Activated CD4-positive, alpha-beta T cell treated with anti-CD3 and anti-CD28 coated beads for 36 hours (primary cell): ENCODE measurements at regions of chr6 and their contacts with region 1.

Region 1: GRCh38 chr6:7725849-7726415 is at the start of gene BMP6:
- DNase-seq: peak; percentile 82
- ATAC-seq: peak; percentile 78
- H3K4me3 Mint-ChIP-seq: peak within 1 kb of the TSS; percentile 69
- H3K27ac Mint-ChIP-seq: no peak within 1 kb of the TSS
- H3K4me1 Mint-ChIP-seq: peaks cover 18% of the 10 kb centered on the region
- H3K27me3 Mint-ChIP-seq: peaks cover 60% of the 10 kb centered on the region
- total RNA-seq, gene BMP6: 0.14 to 0.27 TPM

Region 2: DNA sequence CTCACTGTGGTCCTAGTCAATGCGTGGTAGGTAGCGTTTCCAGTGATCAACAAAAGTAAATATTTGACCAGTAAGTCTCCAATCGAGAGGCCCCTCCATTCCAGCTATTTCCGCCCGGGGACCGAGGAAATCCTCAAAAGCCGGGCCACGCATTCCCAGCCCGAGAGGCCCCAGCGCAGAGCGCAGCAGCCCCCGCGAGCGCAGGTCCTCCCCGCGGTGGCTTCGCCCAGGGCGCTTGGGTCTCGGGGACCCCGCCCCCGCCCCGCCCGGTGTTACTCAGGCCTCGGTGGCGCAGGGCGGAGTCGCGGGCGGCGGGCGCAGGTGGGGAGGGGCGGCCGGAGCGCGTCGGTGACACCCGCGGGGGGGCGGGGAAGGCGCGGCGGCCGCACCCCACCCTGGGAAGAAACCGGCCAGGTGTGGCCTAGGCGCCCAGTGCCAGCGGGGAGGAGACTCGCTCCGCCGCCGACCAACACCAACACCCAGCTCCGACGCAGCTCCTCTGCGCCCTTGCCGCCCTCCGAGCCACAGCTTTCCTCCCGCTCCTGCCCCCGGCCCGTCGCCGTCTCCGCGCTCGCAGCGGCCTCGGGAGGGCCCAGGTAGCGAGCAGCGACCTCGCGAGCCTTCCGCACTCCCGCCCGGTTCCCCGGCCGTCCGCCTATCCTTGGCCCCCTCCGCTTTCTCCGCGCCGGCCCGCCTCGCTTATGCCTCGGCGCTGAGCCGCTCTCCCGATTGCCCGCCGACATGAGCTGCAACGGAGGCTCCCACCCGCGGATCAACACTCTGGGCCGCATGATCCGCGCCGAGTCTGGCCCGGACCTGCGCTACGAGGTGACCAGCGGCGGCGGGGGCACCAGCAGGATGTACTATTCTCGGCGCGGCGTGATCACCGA is 184.5 kb before region 1 on chr6 and contains the start of gene DSP:
- CTCF ChIA-PET with region 1: no interaction called
- POLR2A ChIA-PET with region 1: no interaction called
- intact Hi-C with region 1: loop called (anchors 5 kb)
- DNase-seq: peak; percentile 64
- ATAC-seq: peak; percentile 83
- H3K4me3 Mint-ChIP-seq: peak within 1 kb of the TSS; percentile 69
- H3K27ac Mint-ChIP-seq: no peak within 1 kb of the TSS
- H3K4me1 Mint-ChIP-seq: peaks cover 11% of the 10 kb centered on the region
- H3K27me3 Mint-ChIP-seq: peaks cover 58% of the 10 kb centered on the region
- total RNA-seq, gene DSP: 0.05 to 0.09 TPM

Region 3: GRCh38 chr6:7910654-7911344 is 184.9 kb after region 1 on chr6 and contains the start of gene TXNDC5:
- CTCF ChIA-PET with region 1: interaction called, 3 read pairs
- POLR2A ChIA-PET with region 1: no interaction called
- intact Hi-C with region 1: loop called (anchors 1 to 5 kb)
- DNase-seq: peak; percentile 83
- ATAC-seq: peak; percentile 87
- H3K4me3 Mint-ChIP-seq: peak within 1 kb of the TSS; percentile 91
- H3K27ac Mint-ChIP-seq: peak within 1 kb of the TSS; percentile 76
- H3K4me1 Mint-ChIP-seq: peaks cover 15% of the 10 kb centered on the region
- H3K27me3 Mint-ChIP-seq: no peaks in the 10 kb centered on the region
- total RNA-seq, gene TXNDC5: 44.4 to 52.8 TPM

Region 4: DNA sequence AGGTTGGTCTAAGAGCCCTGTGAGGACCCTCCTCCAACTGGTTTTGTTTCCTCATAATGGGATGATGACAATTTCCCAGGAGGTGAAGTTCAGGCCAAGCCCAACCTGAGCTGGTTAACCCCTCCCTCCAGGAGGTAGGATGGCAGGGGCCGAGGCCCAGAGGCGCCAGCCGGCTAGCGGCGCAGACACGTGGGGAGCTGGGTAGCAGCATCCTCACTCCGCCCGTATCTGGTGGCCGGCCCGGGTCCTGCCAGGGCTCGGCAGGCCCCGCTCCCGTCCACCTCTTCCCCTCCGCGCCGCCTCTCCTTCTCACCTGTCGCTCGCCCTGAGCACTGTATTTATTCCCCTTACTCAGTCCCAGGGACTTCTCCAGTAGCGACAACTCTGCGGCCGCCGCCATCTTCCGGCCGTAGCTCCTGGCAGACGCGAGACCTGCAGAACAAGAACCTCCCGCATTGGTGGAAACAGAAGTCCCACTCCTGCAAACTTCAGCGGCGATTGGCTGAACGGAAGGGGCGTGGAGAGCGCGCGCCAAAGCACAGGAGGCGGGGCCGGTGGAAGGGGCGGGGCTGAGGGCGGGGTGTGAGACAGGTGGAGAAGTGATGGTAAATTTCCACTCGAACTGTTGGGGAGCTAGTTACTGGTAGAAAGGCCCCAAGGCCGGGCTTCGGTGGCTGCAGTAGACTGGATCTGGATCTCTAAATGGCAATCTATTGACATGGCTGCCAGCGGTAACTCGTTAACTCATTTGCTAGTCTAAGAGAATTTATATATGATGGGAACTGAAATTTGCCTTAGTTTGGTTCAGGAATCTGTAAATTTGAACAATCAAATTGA is 376.4 kb after region 1 on chr6 and contains the start of gene EEF1E1:
- CTCF ChIA-PET with region 1: interaction called, 3 read pairs
- POLR2A ChIA-PET with region 1: no interaction called
- intact Hi-C with region 1: loop called in 1 of 2 experiments (anchors 2 kb)
- DNase-seq: peak; percentile 99
- ATAC-seq: peak; percentile 98
- H3K4me3 Mint-ChIP-seq: peak within 1 kb of the TSS; percentile 88
- H3K27ac Mint-ChIP-seq: peak within 1 kb of the TSS; percentile 96
- H3K4me1 Mint-ChIP-seq: peaks cover 24% of the 10 kb centered on the region
- H3K27me3 Mint-ChIP-seq: peaks cover 15% of the 10 kb centered on the region
- total RNA-seq, gene EEF1E1: 73.4 to 74.6 TPM

Region 5: DNA sequence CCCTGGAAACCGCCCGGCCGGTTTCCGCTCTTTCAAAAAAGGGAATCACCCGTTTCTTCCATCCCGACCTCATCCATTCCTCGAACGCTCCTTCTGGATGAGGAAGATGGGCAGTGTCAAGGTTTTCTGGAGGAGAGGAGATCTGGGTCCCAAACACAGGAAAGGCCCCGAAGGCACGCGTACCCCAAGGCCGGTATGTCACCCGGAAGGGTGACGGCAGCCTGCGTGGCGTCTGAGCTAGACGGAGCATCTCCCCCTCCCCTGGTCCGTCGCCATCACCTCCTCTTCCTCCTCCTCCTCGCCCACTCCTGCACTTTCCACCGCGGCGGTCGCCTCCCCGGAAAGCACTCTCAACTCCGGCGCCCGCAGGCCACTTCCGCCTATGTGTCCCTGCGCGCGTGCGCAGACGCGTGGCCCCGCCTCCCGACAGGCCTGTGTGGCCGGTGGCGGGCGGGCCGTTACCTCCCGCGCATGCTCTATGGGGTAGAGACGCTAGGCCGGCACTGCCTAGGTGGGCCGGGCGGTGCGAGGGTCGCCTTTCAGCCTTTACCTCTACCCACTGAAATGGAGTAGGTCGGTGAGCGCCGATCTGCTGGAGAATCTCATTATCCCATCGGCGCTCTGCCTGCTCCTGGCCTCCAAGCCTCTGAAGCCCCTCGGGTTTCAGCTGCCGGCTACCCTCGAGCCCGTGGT is 709.4 kb after region 1 on chr6 and contains the start of gene SLC35B3:
- CTCF ChIA-PET with region 1: no interaction called
- POLR2A ChIA-PET with region 1: no interaction called
- intact Hi-C with region 1: loop called in 1 of 2 experiments (anchors 1 kb)
- DNase-seq: peak; percentile 99
- ATAC-seq: peak; percentile 95
- H3K4me3 Mint-ChIP-seq: peak within 1 kb of the TSS; percentile 92
- H3K27ac Mint-ChIP-seq: peak within 1 kb of the TSS; percentile 95
- H3K4me1 Mint-ChIP-seq: peaks cover 38% of the 10 kb centered on the region
- H3K27me3 Mint-ChIP-seq: no peaks in the 10 kb centered on the region
- total RNA-seq, gene SLC35B3: 4.9 to 6.7 TPM